Spleen (tissue), 13 donors: ENCODE measurements at regions of chr21 and their contacts with region 1.

Region 1: DNA sequence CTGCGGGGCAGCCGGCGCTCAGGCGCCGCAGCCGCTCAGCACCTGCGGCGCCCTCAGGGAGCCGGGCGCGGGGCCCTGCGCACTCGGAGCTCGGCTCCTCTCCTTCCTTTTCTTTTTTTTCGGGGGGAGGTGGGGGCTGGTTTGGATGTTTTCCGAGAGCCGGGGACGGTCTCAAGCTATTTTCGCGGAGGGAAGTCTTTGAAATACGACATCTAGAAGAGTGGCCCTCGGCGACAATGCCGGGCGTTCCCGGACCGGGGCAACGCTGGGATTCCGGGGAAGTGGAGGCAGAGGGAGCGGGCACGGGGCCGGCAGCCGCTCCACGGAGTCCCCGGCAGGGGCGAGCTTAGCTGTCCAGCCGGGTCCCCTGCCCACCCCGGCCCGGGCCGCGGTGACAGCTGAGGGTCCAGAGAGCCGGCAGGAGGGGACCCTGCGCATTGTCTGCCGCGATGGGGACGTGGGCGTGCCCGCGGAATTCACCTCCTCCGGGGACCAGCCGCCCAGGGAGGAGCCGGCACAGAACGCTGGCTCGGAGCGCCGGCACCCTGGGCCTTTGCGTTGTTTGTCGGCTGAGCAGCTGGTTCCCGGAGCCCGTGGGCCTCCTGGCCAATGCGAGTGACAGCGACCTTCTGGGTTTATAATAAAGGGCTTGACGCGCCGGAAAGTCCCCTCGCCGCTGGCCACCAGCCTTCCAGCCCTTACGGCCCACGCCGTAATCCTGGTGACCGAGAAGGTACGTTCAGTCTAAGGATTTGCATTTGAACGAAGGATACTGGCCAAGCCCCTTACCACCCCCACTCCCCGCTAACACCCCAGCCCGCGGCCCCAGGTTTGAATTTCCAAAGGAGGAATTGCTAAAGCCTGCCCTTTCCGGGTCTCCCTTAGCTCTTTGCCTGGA is 582 bp downstream of the SLC37A1 start:
- DNase-seq: peak; percentile 91
- H3K4me3 ChIP-seq: peak overlapping the region; percentile 77 to 96 (median 86)
- H3K27ac ChIP-seq: peak overlapping the region; percentile 69 to 91 (median 84)
- H3K4me1 ChIP-seq: peaks cover 17 to 56% (median 39%) of the 10 kb centered on the region in 6 donors
- H3K27me3 ChIP-seq: no peaks in the 10 kb centered on the region
- CTCF ChIP-seq: no peak
- POLR2A ChIP-seq: no peak

Region 2: GRCh38 chr21:42366321-42367009 is 147.8 kb before region 1 on chr21 and contains the start of gene TFF1:
- intact Hi-C with region 1: no loop called
- DNase-seq: no peak
- H3K4me3 ChIP-seq: no peak within 1 kb of the TSS
- H3K27ac ChIP-seq: no peak within 1 kb of the TSS
- H3K4me1 ChIP-seq: no peaks in the 10 kb centered on the region
- H3K27me3 ChIP-seq: peaks cover 0 to 59% (median 5%) of the 10 kb centered on the region in 7 donors
- CTCF ChIP-seq: no peak
- POLR2A ChIP-seq: no peak
- total RNA-seq, gene TFF1: not detected

Region 3: DNA sequence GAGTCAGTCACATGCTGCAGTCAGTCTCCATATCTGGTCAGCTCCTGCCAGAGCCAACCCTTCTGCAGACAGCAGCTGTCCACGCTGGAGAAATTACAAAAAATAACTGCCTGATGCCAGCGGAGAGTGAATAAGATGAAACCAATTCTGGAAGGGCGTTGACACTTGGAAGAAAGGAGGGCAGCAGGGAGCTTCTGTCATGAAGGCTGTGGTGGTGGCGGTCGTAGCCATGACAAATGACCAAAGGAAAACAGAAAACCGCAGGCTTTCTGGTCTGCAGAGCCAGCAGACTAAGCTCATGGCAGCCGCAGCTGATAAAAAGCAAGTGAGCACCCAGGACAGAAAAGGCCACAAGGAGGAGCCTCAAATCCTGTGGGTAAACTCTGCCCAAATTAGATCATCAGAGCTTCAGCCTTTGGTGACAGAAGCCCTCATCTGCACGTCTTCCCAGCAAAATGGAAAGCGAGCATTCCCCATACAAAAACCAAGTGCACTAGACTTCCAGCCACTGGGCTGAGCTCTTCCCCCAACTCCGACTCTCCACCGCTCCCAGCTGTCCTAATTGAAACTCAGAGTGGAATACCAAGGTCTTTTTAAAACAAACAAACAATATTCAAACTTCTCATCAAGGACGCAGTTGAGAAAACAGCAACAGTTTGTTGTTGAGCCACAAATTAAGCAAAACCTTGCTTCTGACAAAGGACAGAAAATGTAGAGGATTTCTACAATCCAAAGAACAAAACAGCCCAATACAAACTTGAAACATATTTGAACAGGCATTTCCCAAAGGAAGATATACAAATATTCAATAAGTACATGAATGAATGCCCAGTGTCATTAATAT is 46.9 kb before region 1 on chr21:
- intact Hi-C with region 1: loop called (anchors 10 kb)
- DNase-seq: no peak
- H3K4me3 ChIP-seq: no peak overlapping the region
- H3K27ac ChIP-seq: no peak overlapping the region
- H3K4me1 ChIP-seq: peaks cover 3 to 51% (median 33%) of the 10 kb centered on the region in 6 donors
- H3K27me3 ChIP-seq: peaks cover 0 to 22% (median 0%) of the 10 kb centered on the region in 7 donors
- CTCF ChIP-seq: peak in 4 of 11 experiments; percentile 21 to 33 (median 29)
- POLR2A ChIP-seq: no peak